ENCODE measurements at regions of chr10 and their contacts with region 1.

Region 1: GRCh38 chr10:21993360-21994001 is 10.0 kb downstream of the DNAJC1 start:
- H3K4me3 ChIP-seq: no peak overlapping the region
- H3K27ac ChIP-seq: no peak overlapping the region
- H3K4me1 ChIP-seq: peaks cover 6% of the 10 kb centered on the region
- CTCF ChIP-seq: 0 out of 2 replicates have a peak, but pooled peaks have one; percentile 26

Region 2: DNA sequence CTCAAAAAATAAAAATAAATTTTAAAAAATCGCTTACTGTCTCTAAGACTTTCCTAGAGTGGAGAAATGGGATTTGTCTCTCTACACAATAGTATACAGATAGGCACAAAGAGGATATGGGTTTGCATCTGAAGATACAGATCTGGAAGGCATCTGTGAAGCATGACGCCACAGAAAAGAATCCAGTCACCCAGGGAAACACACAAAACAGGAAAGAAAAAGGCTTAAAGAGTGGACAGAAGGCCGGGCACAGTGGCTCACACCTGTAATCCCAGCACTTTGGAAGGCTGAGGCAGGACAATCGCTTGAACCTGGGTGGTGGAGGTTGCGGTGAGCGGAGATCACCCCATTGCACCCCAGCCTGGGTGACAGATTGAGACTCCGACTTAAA is 529.3 kb before region 1 on chr10:
- CTCF ChIA-PET with region 1: no interaction called
- POLR2A ChIA-PET with region 1: no interaction called
- H3K4me3 ChIP-seq: no peak overlapping the region
- H3K27ac ChIP-seq: no peak overlapping the region
- H3K4me1 ChIP-seq: no peaks in the 10 kb centered on the region
- CTCF ChIP-seq: no peak

Region 3: DNA sequence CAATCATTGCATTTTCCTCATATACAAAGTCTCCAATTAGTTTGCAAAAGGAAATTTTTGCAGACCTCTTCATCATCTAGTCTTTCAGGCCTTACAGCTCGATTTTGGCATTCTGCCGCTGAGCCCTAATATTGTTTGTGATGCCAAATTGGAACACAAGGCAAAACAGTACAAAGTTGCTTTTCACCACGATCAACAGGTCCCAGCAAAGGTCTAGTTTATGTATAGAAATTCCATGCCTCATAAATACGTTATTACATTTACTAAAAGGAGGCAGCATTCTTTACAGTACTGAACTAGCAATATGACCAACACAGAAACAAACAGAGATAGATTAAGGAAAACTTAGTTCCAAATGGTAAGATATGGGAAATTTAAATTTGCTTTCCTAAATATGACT is 17.1 kb after region 1 on chr10:
- CTCF ChIA-PET with region 1: interaction called, 10 read pairs
- POLR2A ChIA-PET with region 1: no interaction called
- H3K4me3 ChIP-seq: no peak overlapping the region
- H3K27ac ChIP-seq: no peak overlapping the region
- H3K4me1 ChIP-seq: no peaks in the 10 kb centered on the region
- CTCF ChIP-seq: no peak

Region 4: DNA sequence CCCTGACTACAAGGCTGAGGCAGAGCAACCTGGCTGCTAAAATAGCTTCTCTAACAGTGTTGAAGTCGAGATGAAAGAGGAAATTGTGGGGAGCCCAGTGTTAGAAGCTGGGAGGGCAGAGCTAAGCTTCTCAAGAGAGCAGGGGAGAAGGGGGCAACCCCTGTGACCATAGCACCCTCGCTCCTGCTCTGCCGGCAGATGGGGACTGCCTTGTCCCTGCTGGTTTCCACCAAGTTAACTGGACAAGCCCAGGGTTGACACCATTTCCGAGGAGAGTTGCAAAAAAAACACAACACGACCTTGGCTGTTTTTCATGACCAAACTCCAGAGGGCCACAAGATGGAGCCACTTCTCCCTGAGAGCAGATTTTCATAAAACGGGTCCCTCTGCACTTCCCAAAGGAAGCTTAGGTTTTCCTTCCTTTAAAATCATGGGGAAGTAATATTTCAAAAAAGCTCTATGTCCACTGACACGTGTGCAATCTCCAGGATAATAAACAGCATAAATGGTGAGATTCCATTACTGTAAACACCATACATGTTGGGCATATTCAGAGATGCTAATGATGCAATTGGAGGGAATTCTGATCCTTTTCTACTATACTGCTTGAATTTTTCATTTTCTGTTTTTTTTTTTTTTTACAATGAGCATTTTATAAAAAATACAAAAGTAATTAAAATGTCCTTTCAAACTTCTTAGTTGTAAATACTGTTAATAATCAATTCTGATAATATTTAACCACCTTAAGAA is 580.5 kb after region 1 on chr10:
- CTCF ChIA-PET with region 1: interaction called, 11 read pairs
- POLR2A ChIA-PET with region 1: no interaction called
- H3K4me3 ChIP-seq: no peak overlapping the region
- H3K27ac ChIP-seq: no peak overlapping the region
- H3K4me1 ChIP-seq: no peaks in the 10 kb centered on the region
- CTCF ChIP-seq: no peak